ENCODE measurements at regions of chr1 and their contacts with region 1.

Region 1: GRCh38 chr1:9825454-9826090 is 1.8 kb upstream of the CLSTN1 start:
- DNase-seq: no peak
- H3K4me3 ChIP-seq: peak overlapping the region; percentile 84 to 93 (median 91)
- H3K27ac ChIP-seq: peak overlapping the region; percentile 90 to 98 (median 92)
- H3K4me1 ChIP-seq: peaks cover 23 to 46% (median 42%) of the 10 kb centered on the region in 4 donors
- H3K27me3 ChIP-seq: no peaks in the 10 kb centered on the region
- CTCF ChIP-seq: no peak
- EP300 ChIP-seq: no peak
- POLR2A ChIP-seq: no peak

Region 2: GRCh38 chr1:9784508-9785133 is 41.0 kb before region 1 on chr1:
- intact Hi-C with region 1: loop called (anchors 5 kb)
- DNase-seq: no peak
- H3K4me3 ChIP-seq: no peak overlapping the region
- H3K27ac ChIP-seq: no peak overlapping the region
- H3K4me1 ChIP-seq: peaks cover 0 to 10% (median 2%) of the 10 kb centered on the region in 4 donors
- H3K27me3 ChIP-seq: no peaks in the 10 kb centered on the region
- CTCF ChIP-seq: peak; percentile 59 to 77 (median 64)
- EP300 ChIP-seq: no peak
- POLR2A ChIP-seq: no peak

Measured in esophagus muscularis mucosa (tissue), 4 donors.